ENCODE measurements at regions of chr5 and their contacts with region 1.

Region 1: GRCh38 chr5:87010736-87011135 is 256.9 kb upstream of the RASA1 start:
- DNase-seq: no peak
- ATAC-seq: no peak
- H3K4me3 ChIP-seq: no peak overlapping the region
- H3K27ac ChIP-seq: no peak overlapping the region
- H3K4me1 ChIP-seq: no peaks in the 10 kb centered on the region
- H3K27me3 ChIP-seq: no peaks in the 10 kb centered on the region
- CTCF ChIP-seq: no peak
- POLR2A ChIP-seq: no peak

Region 2: GRCh38 chr5:86880785-86881492 is 129.8 kb before region 1 on chr5:
- in situ Hi-C with region 1: no loop called
- intact Hi-C with region 1: loop called (anchors 5 kb)
- DNase-seq: no peak
- ATAC-seq: peak; percentile 44 to 52
- H3K4me3 ChIP-seq: no peak overlapping the region
- H3K27ac ChIP-seq: no peak overlapping the region
- H3K4me1 ChIP-seq: no peaks in the 10 kb centered on the region
- H3K27me3 ChIP-seq: no peaks in the 10 kb centered on the region
- CTCF ChIP-seq: peak; percentile 30 to 59 (median 36)
- POLR2A ChIP-seq: no peak

Region 3: GRCh38 chr5:87231037-87231819 is 220.5 kb after region 1 on chr5:
- in situ Hi-C with region 1: no loop called
- intact Hi-C with region 1: no loop called
- DNase-seq: no peak
- ATAC-seq: no peak
- H3K4me3 ChIP-seq: no peak overlapping the region
- H3K27ac ChIP-seq: no peak overlapping the region
- H3K4me1 ChIP-seq: no peaks in the 10 kb centered on the region
- H3K27me3 ChIP-seq: no peaks in the 10 kb centered on the region
- CTCF ChIP-seq: no peak
- POLR2A ChIP-seq: no peak

Measured in gastrocnemius medialis (tissue), 4 donors.